Dorsolateral prefrontal cortex (tissue), 120 donors: ENCODE measurements at regions of chr2 and their contacts with region 1.

Region 1: DNA sequence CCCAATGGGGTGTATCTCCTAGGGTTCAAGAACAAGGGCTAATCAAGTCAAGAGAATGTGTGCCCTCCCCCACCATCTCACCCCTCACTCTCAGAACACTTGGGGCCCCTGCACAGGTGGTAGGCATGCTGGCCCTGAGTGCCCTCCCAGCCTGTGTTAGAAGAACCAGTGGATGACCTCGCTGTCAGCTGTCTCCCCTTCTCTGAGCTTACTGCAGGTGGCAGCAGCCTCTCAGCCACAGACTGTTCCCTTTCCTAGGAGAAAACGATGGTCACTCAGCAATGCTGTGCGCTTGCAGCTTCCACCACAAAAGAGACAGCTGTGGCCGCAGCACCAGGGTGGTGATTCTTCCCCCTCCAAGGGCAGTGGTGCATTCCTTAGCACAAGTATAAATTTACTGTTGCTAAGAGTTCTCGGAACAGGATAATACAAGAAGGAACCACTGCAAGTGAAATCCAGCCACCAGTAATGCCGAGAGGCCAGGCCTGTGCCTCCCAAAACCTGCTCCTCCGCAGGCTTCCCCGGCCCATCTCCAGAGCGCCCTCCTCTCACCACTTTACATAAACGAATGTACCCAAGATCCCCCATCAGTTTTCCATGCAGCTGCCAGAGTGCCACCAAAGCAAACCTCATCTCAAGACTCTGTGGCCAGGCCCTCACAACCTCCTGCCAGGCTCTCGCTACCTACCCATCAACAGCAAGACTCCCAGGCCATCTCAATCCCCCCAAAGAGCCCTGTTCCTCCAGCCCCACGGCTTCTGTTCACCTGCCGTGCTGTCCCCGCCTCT is 935 bp upstream of the RAMP1 start:
- DNase-seq: peak; percentile 63 to 88 (median 84)
- H3K4me3 ChIP-seq: peak overlapping the region in 57 of 59 donors; percentile 7 to 83 (median 70)
- H3K27ac ChIP-seq: peak overlapping the region in 57 of 59 donors; percentile 6 to 93 (median 74)
- H3K27me3 ChIP-seq: peaks cover 0 to 2% (median 0%) of the 10 kb centered on the region in 45 donors
- CTCF ChIP-seq: peak; percentile 40 to 95 (median 84)

Region 2: DNA sequence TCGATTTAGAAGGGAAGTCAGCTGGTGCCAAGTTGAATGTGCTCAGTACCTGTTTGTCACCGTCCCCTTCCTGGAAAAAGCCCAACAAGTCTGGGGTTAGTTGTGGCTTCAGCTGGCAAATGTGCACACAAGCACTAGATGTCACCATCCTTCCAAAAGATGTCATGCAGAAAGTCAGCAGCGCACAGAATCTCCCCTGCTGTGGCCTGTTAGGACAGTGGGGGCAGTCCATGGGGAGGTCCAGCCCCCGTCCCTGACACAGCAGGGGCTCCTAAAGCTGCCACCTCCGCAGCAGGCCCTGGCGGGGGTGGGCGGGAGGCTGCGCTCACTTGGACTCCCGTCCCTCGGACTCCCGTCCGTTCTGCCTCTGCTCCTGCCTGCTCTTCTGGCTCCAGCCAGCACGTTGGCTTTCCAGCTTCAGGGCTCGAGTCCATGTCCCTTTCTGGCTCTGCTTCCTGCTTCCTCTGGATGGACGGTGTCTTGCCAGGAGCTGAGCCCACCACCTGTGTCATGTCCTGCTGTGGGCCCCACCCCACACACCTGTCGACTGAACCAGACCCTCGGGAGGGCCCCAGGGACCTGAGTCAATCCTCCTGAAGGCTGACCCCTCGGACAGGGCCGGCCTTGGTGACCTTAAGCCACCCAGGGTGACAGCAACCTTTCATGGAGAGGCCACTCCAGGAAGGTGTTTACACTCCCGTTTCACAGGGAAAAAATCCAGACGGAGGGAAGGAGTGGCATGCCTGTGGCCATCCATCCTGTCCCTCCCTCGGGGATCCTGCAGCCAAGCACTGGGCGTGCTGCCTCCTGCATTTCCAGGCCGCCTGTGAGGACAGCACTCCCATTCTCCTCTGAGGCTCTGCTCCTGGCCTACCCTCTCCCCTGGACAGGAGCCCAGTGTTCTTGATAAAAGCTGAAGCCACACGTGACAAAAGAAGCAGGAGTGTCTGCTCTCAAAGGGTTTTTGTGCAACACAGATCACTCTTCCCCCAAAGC is 276.4 kb before region 1 on chr2:
- intact Hi-C with region 1: no loop called
- DNase-seq: peak in 6 of 10 donors; percentile 28 to 63 (median 52)
- H3K4me3 ChIP-seq: peak overlapping the region in 28 of 59 donors; percentile 4 to 49 (median 32)
- H3K27ac ChIP-seq: peak overlapping the region in 16 of 59 donors; percentile 9 to 72 (median 36)
- H3K27me3 ChIP-seq: no peaks in the 10 kb centered on the region
- CTCF ChIP-seq: peak in 53 of 56 donors; percentile 20 to 67 (median 48)

Region 3: GRCh38 chr2:237895544-237896506 is 37.3 kb after region 1 on chr2:
- intact Hi-C with region 1: no loop called
- DNase-seq: peak in 9 of 10 donors; percentile 29 to 79 (median 67)
- H3K4me3 ChIP-seq: no peak overlapping the region
- H3K27ac ChIP-seq: peak overlapping the region in 55 of 59 donors; percentile 6 to 89 (median 71)
- H3K27me3 ChIP-seq: no peaks in the 10 kb centered on the region
- CTCF ChIP-seq: no peak

Region 4: DNA sequence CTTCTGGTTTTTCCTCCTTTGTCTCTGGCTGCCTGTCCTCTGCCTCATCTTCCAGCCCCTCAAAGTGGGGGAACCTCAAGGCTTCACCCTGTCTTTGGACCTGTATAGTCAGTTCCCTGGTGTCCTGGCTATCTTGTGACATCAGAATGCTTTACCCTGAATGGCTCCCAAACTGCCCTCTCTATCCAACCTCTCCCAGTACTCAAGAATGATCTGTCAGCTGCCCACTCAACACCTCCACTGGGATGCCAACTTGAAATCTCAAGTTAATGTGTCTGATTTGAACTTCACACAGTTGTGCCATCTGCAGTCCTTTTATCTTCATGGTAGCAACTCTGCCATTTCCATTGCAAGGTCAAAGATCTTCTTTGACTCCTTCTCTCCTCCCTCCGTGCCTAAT is 152.1 kb after region 1 on chr2:
- intact Hi-C with region 1: loop called in 1 of 2 experiments (anchors 5 kb)
- DNase-seq: no peak
- H3K4me3 ChIP-seq: no peak overlapping the region
- H3K27ac ChIP-seq: peak overlapping the region in 26 of 59 donors; percentile 20 to 98 (median 88)
- H3K27me3 ChIP-seq: no peaks in the 10 kb centered on the region
- CTCF ChIP-seq: no peak

Region 5: GRCh38 chr2:238060542-238061314 is 202.2 kb after region 1 on chr2 and contains the start of gene SCLY:
- intact Hi-C with region 1: loop called in 1 of 2 experiments (anchors 2 kb)
- DNase-seq: peak; percentile 96 to 99 (median 98)
- H3K4me3 ChIP-seq: peak within 1 kb of the TSS; percentile 78 to 99 (median 95)
- H3K27ac ChIP-seq: peak within 1 kb of the TSS; percentile 64 to 96 (median 90)
- H3K27me3 ChIP-seq: no peaks in the 10 kb centered on the region
- CTCF ChIP-seq: peak in 32 of 56 donors; percentile 9 to 57 (median 26)
- total RNA-seq, gene SCLY: 12.6 to 37.0 (median 22.2) TPM

Region 6: DNA sequence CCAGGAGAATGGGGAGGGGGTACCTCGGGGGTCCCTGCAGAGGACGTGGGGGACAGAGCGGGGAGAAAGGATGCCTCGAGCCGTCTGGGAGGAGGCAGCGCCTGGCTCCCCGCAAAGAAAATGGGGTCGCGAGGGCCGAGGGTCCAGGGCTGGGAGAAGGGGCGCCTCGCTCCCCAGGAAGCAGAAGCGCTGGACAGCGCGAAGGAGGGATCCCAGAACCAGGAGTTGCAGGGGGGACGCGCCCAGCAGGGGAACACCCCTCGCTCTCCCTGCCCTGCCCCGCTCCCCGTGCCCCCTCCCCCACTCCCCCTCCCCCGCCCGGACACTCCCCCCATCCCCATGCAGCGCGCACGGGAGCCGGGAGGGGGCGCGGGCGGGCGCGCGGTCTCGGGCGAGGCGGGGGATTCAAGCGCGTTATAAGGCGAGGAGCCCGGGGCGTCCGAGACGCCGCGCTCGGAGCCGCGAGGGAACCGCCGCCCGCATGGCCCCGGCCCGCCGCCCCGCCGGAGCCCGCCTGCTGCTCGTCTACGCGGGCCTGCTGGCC is 300.1 kb after region 1 on chr2 and contains the start of gene ERFE:
- intact Hi-C with region 1: loop called in 1 of 2 experiments (anchors 10 kb)
- DNase-seq: peak in 1 of 10 donors; percentile 64
- H3K4me3 ChIP-seq: peak within 1 kb of the TSS in 37 of 59 donors; percentile 3 to 56 (median 31)
- H3K27ac ChIP-seq: no peak within 1 kb of the TSS
- H3K27me3 ChIP-seq: peaks cover 0 to 29% (median 4%) of the 10 kb centered on the region in 45 donors
- CTCF ChIP-seq: peak in 54 of 56 donors; percentile 15 to 66 (median 47)
- total RNA-seq, gene ERFE: 0.35 to 6.8 (median 2.2) TPM

Region 7: DNA sequence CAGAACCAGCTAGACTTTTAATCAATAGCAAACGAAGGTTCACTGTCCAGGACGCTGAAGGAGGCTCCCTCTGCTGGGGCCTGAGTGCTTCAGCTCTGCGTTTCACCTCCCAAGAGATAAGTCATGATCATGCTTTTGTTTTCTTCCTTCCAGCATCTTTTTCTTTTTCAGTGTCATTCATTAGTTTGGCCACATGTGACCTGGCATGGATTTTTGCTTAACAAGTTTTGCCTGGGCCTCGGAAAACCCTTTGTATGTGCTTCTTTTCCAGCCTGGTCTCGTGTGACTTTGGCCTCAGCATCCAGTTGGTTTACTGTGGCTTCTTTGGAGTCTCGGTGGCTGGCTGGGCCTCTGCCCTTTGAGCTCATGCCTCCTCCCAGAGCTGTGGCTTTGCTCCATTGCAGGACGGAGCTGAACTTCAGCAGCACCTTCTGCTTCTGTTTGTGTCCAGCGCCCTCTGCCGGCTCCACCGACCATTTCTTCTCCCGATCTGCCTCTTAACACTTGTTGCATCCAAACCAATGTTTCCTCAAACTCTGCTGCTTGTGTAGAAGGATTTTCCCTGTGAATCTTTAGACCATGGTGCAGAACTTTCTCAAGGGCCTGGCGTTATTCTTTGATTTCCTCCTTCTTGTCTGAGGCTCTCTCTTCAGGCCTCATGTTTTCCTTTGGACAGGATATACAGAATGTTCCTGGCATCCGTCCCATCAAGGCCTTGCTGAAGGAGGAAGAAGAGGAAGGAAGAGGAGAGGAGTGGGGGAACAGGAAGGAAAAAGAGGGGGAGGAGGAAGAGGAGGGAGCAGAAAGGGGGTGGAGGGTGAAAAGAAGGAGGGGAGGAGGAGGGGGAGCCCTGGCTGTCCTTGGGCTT is 404.9 kb after region 1 on chr2:
- intact Hi-C with region 1: loop called (anchors 1 to 2 kb)
- DNase-seq: peak; percentile 85 to 98 (median 94)
- H3K4me3 ChIP-seq: peak overlapping the region in 1 of 59 donors; percentile 7
- H3K27ac ChIP-seq: peak overlapping the region in 42 of 59 donors; percentile 1 to 78 (median 56)
- H3K27me3 ChIP-seq: no peaks in the 10 kb centered on the region
- CTCF ChIP-seq: peak; percentile 50 to 95 (median 88)